A673 (cell line): ENCODE measurements at regions of chr12 and their contacts with region 1.

Region 1: DNA sequence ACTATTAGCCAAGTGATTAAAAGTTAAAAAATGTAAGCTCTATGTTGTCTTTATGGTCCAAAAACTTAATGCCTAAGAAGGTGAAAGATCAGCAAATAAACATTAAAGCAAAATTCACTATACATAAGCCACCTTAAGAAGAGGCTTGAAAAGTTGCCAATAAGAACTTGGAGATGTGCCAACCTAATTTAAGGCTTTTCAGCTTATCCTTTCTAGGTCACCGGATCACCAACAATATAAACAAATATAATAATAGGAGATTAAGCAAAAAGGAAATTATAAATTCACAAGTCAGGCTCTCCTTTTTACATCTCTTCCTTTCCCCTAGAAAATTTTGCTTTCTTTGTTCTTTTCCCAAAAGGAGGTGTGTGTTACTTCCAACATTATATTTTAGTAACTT is 30.9 kb downstream of the SLC2A3 start:
- DNase-seq: peak; percentile 83
- H3K4me3 ChIP-seq: peak overlapping the region; percentile 16
- H3K27ac ChIP-seq: peak overlapping the region; percentile 81
- H3K4me1 ChIP-seq: peaks cover 20% of the 10 kb centered on the region
- H3K27me3 ChIP-seq: no peaks in the 10 kb centered on the region
- CTCF ChIP-seq: no peak

Region 2: DNA sequence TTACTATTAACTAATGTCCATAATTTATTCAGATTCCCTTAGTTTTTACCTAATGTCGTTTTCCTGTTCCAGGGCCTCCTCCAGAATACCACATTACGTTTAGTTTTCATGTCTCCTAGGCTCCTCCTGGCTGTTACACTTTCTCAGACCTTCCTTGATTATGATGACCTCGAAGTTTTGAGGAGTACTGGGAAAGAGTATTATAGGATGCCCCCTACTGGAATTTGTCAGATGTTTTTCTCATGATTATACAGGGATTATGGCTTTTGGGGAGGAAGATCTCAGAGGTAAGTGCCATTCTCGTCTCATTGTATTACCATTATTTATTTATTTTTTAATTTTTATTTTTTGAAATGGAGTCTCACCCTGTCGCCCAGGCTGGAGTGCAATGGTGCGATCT is 862.2 kb before region 1 on chr12:
- CTCF ChIA-PET with region 1: no interaction called
- POLR2A ChIA-PET with region 1: no interaction called
- intact Hi-C with region 1: no loop called
- DNase-seq: peak; percentile 67
- H3K4me3 ChIP-seq: no peak overlapping the region
- H3K27ac ChIP-seq: no peak overlapping the region
- H3K4me1 ChIP-seq: no peaks in the 10 kb centered on the region
- H3K27me3 ChIP-seq: no peaks in the 10 kb centered on the region
- CTCF ChIP-seq: peak; percentile 63

Region 3: DNA sequence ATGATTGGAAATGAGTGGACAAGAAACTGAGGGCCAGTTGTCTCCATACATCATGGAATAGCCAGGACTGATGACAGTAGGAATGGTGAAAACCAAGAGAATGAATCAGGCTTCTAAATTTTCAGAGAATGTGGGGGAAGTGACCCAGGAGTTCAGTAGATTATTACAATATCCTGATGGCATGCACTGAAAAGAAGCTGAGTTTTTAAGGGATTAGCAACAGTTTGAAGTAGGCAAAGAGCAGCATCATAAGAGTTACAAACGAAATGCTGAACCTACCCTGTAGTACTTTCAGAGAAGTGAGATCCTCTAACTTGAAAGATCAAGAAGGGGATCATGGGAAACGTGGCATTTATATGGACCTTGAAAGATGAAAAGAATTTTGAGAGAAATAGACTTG is 45.5 kb before region 1 on chr12:
- CTCF ChIA-PET with region 1: interaction called, 4 read pairs
- POLR2A ChIA-PET with region 1: no interaction called
- intact Hi-C with region 1: loop called (anchors 2 kb)
- DNase-seq: no peak
- H3K4me3 ChIP-seq: no peak overlapping the region
- H3K27ac ChIP-seq: no peak overlapping the region
- H3K4me1 ChIP-seq: peaks cover 18% of the 10 kb centered on the region
- H3K27me3 ChIP-seq: no peaks in the 10 kb centered on the region
- CTCF ChIP-seq: no peak

Region 4: GRCh38 chr12:7989827-7990551 is 84.9 kb after region 1 on chr12:
- CTCF ChIA-PET with region 1: no interaction called
- POLR2A ChIA-PET with region 1: no interaction called
- intact Hi-C with region 1: no loop called
- DNase-seq: peak; percentile 36
- H3K4me3 ChIP-seq: no peak overlapping the region
- H3K27ac ChIP-seq: peak overlapping the region; percentile 6
- H3K4me1 ChIP-seq: peaks cover 10% of the 10 kb centered on the region
- H3K27me3 ChIP-seq: no peaks in the 10 kb centered on the region
- CTCF ChIP-seq: no peak